Spleen (tissue), 13 donors: ENCODE measurements at regions of chr5 and their contacts with region 1.

Region 1: DNA sequence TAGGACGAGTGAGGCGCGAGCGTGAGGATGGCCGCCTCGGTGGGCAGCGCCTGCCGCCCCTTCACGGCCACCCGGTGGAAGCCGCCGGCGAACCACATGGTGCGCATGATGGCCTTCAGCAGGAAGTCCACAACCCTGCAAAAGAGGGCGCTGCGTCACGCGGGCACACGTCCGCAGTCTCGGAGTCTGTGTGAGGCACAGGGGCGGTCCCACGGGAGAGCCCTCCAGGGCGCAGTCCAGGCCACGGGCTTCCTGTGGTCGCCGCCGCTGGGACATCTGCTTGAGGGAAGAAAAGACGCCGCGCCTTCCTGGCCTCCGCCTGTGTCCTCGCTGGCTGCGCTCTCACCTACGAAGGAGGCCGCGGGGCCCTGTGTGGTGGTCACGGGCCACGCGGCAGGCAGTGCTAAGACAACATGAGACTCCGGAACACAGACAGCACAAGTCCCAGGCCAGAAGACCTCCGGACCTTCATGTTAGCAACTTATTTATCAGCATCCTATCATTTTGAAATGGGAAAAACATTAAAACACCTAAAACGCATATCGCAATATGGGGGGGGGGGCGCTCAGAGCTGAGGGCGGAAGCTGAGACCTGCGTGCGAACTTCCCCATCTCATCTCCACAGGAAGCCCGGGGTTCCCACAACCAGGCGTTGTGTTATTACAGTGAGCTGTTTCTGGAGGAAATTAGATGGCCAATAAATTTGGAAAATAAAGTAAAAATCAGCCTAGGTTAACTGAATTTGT is 28.8 kb downstream of the LPCAT1 start:
- DNase-seq: peak; percentile 97
- H3K4me3 ChIP-seq: peak overlapping the region in 7 of 8 donors; percentile 12 to 62 (median 26)
- H3K27ac ChIP-seq: peak overlapping the region; percentile 67 to 96 (median 90)
- H3K4me1 ChIP-seq: peaks cover 44 to 100% (median 93%) of the 10 kb centered on the region in 6 donors
- H3K27me3 ChIP-seq: no peaks in the 10 kb centered on the region
- CTCF ChIP-seq: peak in 6 of 11 experiments; percentile 13 to 44 (median 28)
- POLR2A ChIP-seq: no peak

Region 2: DNA sequence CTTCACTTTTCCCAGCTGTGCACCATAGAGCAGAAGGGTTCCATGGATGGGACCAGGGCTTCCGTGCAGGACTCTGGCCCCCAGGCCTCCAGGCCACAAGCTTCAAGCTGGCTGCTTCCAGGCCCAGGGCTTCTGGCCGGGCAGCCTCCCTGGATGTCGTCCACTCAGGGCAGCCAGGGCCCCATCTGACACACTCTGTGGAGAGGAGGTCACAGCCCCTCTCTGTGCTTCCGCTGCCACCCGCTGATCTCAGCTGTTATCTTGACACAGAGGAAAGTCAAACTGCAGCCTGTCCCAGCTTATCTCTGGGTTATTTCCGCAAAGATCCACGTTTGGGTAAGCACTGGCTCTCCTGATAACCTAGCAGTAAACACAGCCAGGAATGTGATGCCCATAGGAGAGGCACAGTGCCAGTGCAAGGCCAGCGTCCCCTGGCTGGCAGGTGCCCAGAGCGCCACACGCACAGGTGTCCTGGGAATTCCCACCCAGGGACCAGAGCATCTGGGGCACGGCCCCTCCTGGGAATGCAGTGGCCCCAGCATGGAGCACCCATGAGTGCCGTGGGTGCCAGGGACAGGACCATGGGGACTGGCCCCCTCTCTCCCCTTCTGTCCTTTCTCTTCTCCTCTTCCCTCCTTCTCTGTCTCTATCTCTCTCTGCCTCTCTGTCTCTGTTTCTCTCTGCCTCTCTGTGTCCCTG is 309.2 kb before region 1 on chr5:
- intact Hi-C with region 1: no loop called
- DNase-seq: no peak
- H3K4me3 ChIP-seq: no peak overlapping the region
- H3K27ac ChIP-seq: no peak overlapping the region
- H3K4me1 ChIP-seq: peaks cover 0 to 28% (median 4%) of the 10 kb centered on the region in 6 donors
- H3K27me3 ChIP-seq: peaks cover 0 to 80% (median 0%) of the 10 kb centered on the region in 7 donors
- CTCF ChIP-seq: no peak
- POLR2A ChIP-seq: no peak

Region 3: DNA sequence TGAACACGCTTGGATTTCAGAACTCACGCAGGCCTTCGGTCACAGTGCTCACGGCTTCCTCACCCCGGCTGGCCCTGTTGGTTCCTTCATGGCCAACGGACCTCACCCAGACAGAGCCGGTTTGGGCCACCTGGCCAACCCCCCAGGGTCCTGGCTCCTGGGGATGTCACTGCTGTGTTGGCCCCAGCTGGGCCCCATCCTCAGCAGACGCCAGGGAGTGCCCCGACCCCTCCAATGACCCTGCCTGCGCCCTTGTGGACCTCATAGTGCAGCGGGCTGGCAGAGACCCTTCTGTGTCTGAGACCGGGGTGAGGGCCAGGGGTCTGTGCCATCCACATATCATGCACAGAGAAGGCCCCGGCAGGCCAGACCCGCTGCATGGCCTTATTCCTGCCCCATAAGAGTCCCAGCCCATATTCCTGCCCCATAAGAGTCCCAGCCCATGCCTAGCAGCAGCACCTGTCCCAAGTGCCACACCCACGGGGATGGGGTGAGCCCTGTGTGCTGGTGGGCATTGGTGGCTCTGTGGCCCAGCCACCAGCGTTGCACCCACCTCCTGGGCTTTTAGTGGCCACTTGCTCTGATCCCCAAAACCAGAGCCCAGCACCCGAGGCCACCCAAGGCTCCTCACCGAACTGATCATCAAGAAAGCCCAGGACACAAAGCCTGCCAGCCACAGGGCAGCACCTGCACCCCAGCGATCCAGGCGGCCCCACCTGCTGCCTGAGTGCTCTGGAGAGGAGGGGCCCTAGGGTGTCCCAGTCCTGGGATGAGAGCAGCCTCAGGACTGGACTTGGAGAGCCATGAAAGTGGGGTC is 30.1 kb after region 1 on chr5:
- intact Hi-C with region 1: loop called (anchors 5 kb)
- DNase-seq: peak; percentile 85
- H3K4me3 ChIP-seq: peak overlapping the region in 2 of 8 donors; percentile 89 to 95
- H3K27ac ChIP-seq: peak overlapping the region in 6 of 8 donors; percentile 94 to 99 (median 98)
- H3K4me1 ChIP-seq: peaks cover 18 to 50% (median 46%) of the 10 kb centered on the region in 6 donors
- H3K27me3 ChIP-seq: no peaks in the 10 kb centered on the region
- CTCF ChIP-seq: no peak
- POLR2A ChIP-seq: no peak